ENCODE measurements at regions of chr7 and their contacts with region 1.

Region 1: DNA sequence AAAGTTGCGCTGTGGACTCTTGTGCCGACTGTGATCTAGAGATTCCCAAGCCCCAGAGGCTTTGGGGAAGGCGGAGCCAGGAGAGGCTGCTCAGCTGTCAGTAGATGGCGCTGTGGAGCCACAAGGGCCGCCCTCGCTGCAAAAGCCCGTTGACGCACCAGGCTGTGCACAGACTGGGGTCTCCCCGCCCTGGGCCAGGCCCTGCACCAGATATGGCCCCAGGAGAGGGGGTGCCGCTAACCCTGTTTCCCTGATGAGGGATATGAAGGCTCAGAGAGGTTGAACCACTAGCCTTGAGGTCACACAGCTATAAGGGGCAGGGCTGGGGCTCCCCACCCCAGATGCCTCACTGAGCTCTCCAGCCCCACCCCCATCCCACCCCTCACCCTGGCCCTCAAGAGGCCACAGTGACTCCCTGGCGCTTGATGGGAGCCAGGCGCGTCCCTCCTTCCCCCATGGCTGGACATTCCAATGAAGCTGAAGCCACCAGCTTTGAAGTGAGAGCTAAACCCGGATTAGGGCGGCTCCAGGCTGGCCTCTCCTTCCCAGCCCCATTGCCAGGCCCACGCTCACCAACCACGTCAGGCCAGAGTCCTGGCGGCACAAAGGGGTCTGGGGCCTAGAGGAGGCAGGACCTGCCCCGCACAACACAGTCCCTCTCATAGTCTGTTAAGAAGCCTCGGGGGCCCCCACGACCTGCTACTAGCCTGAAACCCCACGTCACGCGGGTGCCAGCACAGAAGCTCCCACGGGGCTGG is 26.4 kb downstream of the MYL10 start:
- DNase-seq: peak; percentile 94
- H3K4me3 ChIP-seq: no peak overlapping the region; a peak in 1 of 4 replicates
- H3K27ac ChIP-seq: no peak overlapping the region
- H3K4me1 ChIP-seq: peaks cover 0 to 11% of the 10 kb centered on the region in 2 experiments; a peak in 1 of 4 replicates
- H3K27me3 ChIP-seq: no peaks in the 10 kb centered on the region
- CTCF ChIP-seq: peak; percentile 99
- EP300 ChIP-seq: peak in 1 of 2 experiments; percentile 8; a peak in 1 of 4 replicates
- RAD21 ChIP-seq: peak; percentile 98

Region 2: DNA sequence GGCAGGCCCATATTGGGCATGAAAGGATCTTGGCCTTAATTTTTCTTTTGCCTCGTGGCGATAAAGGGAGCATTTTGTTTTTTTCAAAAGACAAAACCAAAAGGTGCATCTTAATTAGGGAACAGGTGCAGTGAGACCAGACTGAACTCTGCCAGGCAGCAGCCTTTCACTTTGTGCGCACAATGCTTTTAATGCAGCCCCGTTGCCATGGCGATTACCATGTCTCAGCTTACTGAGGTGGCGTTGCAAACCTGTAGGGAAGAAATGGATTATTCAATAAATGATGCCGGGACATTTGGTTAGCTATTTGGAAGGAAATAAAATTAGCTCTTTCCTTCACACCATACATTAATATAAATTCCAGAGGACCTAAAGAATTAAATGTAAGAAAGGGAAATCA is 35.4 kb before region 1 on chr7:
- CTCF ChIA-PET with region 1: interaction called, 14 read pairs
- POLR2A ChIA-PET with region 1: no interaction called
- DNase-seq: no peak
- H3K4me3 ChIP-seq: no peak overlapping the region
- H3K27ac ChIP-seq: no peak overlapping the region
- H3K4me1 ChIP-seq: no peaks in the 10 kb centered on the region; a peak in 1 of 4 replicates
- H3K27me3 ChIP-seq: no peaks in the 10 kb centered on the region
- CTCF ChIP-seq: no peak
- EP300 ChIP-seq: no peak
- RAD21 ChIP-seq: no peak

Region 3: GRCh38 chr7:101614939-101615302 is 12.3 kb after region 1 on chr7:
- CTCF ChIA-PET with region 1: interaction called, 70 read pairs
- POLR2A ChIA-PET with region 1: no interaction called
- DNase-seq: no peak
- H3K4me3 ChIP-seq: no peak overlapping the region
- H3K27ac ChIP-seq: no peak overlapping the region
- H3K4me1 ChIP-seq: peaks cover 6% of the 10 kb centered on the region in 2 experiments; a peak in 3 of 4 replicates
- H3K27me3 ChIP-seq: no peaks in the 10 kb centered on the region
- CTCF ChIP-seq: no peak
- EP300 ChIP-seq: no peak
- RAD21 ChIP-seq: no peak

Region 4: GRCh38 chr7:101688183-101688831 is 85.6 kb after region 1 on chr7:
- CTCF ChIA-PET with region 1: interaction called, 12 read pairs
- POLR2A ChIA-PET with region 1: no interaction called
- DNase-seq: peak; percentile 98
- H3K4me3 ChIP-seq: peak overlapping the region; percentile 14 to 53; a peak in 3 of 4 replicates
- H3K27ac ChIP-seq: no peak overlapping the region
- H3K4me1 ChIP-seq: peaks cover 0 to 6% of the 10 kb centered on the region in 2 experiments; a peak in 1 of 4 replicates
- H3K27me3 ChIP-seq: no peaks in the 10 kb centered on the region
- CTCF ChIP-seq: peak; percentile 95
- EP300 ChIP-seq: no peak
- RAD21 ChIP-seq: peak; percentile 92

Region 5: GRCh38 chr7:102152672-102153585 is 550.3 kb after region 1 on chr7:
- CTCF ChIA-PET with region 1: no interaction called
- POLR2A ChIA-PET with region 1: no interaction called
- DNase-seq: no peak
- H3K4me3 ChIP-seq: no peak overlapping the region
- H3K27ac ChIP-seq: no peak overlapping the region; a peak in 1 of 4 replicates
- H3K4me1 ChIP-seq: no peaks in the 10 kb centered on the region
- H3K27me3 ChIP-seq: no peaks in the 10 kb centered on the region
- CTCF ChIP-seq: no peak
- EP300 ChIP-seq: no peak
- RAD21 ChIP-seq: no peak

Region 6: GRCh38 chr7:102230593-102230992 is 627.9 kb after region 1 on chr7:
- CTCF ChIA-PET with region 1: interaction called, 10 read pairs
- POLR2A ChIA-PET with region 1: no interaction called
- DNase-seq: no peak
- H3K4me3 ChIP-seq: no peak overlapping the region
- H3K27ac ChIP-seq: no peak overlapping the region; a peak in 1 of 4 replicates
- H3K4me1 ChIP-seq: no peaks in the 10 kb centered on the region; a peak in 1 of 4 replicates
- H3K27me3 ChIP-seq: no peaks in the 10 kb centered on the region
- CTCF ChIP-seq: no peak
- EP300 ChIP-seq: no peak
- RAD21 ChIP-seq: no peak

Measured in SK-N-SH (cell line).